Mucosa of descending colon (tissue), 3 donors: ENCODE measurements at regions of chr6 and their contacts with region 1.

Region 1: GRCh38 chr6:83514866-83515466 is 2.6 kb downstream of the PRSS35 start:
- DNase-seq: peak in 1 of 3 donors; percentile 74
- ATAC-seq: peak; percentile 57
- H3K4me3 ChIP-seq: no peak overlapping the region
- H3K4me1 ChIP-seq: peaks cover 7% of the 10 kb centered on the region
- CTCF ChIP-seq: peak; percentile 46

Region 2: DNA sequence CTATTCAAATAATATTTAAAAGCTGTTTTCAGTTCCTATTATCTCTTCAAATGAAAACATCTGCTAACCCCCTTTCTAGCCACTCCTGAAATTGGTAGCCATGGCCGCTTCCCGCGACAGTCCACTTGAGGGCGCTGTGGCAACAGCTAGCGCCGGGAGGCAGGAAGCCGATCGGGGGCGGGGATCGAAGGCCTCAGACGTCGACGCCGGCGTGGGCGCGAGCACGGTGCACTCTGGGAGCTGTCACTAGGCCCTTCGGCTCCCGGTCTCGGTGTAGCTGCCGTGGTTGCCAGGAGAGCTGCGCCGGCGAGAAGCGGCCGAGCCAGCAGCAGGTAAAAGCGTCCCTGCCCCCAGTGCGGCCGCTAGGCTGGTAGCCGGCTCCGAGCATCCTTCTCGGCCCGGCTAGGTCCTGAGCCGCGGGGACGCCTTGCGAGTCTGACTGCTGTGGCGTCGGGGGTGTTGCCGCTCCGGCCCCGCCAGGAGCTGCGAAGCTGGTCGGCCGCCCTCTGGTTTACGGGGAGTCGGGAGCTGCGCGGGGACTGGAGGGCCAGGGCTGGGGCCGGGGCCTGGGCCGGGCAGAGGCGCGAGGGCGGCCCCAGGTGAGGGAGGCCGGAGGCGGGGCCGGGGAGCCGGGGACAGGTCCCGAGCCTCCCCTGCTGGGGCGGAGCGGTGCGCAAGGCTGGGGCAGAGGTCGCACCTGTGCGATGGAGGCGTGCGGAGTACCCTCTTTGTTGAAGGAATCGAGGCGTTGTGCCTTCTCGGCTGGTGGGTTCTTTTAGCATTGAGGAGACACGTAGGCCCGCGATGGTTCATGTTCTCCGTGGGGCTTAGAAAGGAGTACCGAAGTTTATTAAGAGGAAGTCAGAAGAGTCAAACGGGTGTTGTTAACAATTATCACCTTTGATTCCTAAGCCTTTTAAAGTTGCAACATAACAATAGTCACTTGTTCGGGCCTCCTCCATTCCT is 447.2 kb before region 1 on chr6 and contains the start of gene DOP1A:
- intact Hi-C with region 1: loop called in 1 of 2 experiments (anchors 10 kb)
- DNase-seq: peak; percentile 97 to 98 (median 98)
- ATAC-seq: peak; percentile 95
- H3K4me3 ChIP-seq: peak within 1 kb of the TSS; percentile 94
- H3K4me1 ChIP-seq: peaks cover 20% of the 10 kb centered on the region
- CTCF ChIP-seq: peak; percentile 99
- total RNA-seq, gene DOP1A: 28.0 to 35.8 (median 30.4) TPM

Region 3: DNA sequence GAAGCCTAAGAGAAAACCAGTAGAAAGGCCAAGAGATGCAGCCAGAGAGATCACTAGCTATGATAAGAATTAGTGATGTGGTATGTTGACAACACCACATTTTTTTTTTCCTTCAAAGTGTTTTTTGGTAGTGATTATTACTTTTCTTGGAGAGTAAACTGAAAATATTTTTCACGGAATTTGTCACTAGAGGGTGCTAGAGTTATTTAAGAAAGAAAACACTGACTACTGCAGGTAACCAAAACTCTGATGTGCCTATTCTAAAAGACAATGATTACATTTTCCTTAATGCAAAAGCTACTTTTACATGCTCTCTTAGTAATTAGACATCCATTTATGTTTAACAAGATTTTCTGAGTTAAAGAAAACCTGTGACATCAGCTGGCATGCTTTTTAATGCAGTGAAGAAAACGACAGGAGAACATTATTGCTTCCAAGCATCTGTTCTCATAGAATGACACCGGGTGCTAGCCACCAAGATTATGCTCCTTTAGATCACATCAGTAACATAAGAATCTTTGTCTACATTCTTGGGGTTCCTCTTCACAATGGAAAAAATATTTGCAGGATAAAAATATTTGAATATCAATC is 293.0 kb before region 1 on chr6:
- intact Hi-C with region 1: loop called (anchors 5 to 10 kb)
- DNase-seq: no peak
- ATAC-seq: no peak
- H3K4me3 ChIP-seq: no peak overlapping the region
- H3K4me1 ChIP-seq: no peaks in the 10 kb centered on the region
- CTCF ChIP-seq: no peak

Region 4: GRCh38 chr6:83403191-83403590 is 111.8 kb before region 1 on chr6:
- intact Hi-C with region 1: no loop called
- DNase-seq: no peak
- ATAC-seq: no peak
- H3K4me3 ChIP-seq: no peak overlapping the region
- H3K4me1 ChIP-seq: no peaks in the 10 kb centered on the region
- CTCF ChIP-seq: no peak

Region 5: DNA sequence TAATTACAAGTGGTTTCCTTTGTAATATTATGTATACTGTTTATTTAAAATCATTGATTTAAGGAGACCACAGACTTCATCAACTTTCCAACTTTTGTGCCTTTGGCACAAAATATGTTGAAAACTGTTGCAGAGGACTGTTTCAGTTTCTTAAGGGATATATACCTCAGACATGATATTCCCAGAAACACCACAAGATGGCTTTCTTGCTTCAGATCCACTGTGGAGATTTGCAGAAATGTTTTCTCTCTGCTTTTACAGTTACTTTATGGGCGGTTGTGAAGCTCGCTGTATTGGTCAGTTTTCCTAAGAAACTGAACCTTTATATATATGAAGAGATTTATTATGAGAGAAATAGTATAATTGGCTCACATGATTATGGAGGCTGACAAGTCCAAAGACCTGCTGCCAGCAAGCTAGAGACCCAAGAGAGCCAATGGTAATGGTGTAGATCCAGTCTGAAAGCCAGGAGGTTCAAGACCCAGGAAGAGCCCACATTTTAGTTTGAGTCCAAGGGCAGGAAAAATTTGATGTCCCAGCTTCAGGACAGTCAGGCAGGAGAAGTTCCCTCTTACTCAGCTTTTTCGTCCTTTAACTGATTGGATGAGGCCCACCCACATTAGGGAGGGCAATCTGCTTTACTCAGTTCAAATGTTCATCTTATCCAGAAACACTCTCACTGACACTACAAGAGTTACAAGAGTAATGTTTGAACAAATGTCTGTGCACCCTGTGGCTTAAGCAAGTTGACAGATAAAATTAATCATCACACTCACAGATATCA is 96.9 kb before region 1 on chr6:
- intact Hi-C with region 1: loop called (anchors 5 to 10 kb)
- DNase-seq: peak in 1 of 3 donors; percentile 54
- ATAC-seq: peak; percentile 82
- H3K4me3 ChIP-seq: no peak overlapping the region
- H3K4me1 ChIP-seq: no peaks in the 10 kb centered on the region
- CTCF ChIP-seq: peak; percentile 54